ENCODE measurements at regions of chr2 and their contacts with region 1.

Region 1: DNA sequence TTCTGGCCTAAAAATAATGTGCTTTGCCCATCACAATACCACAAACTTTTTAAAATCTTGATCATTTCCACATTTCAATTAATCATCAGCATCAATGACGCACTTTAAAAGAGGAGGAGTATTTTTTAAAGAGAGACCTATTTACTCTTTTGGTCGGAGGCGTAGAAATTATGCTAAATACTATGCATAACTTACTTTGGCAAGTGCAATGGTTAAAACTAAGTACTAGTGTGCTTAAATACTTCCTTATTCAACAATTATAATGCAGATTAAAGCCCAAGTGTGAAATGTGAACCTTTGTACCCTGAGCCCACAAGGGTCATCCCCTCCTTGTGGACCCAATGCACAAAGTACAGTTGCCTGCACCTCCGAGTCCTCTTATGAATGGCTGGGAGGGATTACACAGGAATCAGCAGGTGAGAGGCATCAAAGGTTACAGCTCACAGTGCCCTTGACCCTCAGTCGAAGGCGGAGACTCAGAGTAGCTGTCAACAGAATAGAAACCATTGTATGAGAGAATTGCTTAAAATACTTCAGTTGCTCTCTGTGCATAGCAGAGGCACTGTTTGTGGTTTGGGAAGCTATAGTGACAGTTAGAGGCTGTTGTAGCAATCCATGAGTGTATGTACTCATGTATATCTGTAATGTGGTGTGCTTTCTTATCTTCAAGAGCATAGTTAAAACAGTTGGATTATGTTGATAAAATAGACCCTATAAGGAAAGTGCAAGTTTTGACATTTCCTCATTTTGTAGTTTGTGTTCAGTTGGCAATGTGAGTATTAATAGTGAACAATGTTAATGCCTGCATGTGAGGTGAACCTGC is 151.7 kb upstream of the ITGA4 start:
- DNase-seq: peak; percentile 96
- ATAC-seq: peak; percentile 80
- H3K4me3 ChIP-seq: no peak overlapping the region
- H3K27ac ChIP-seq: peak overlapping the region; percentile 99
- H3K4me1 ChIP-seq: peaks cover 49% of the 10 kb centered on the region
- H3K27me3 ChIP-seq: no peaks in the 10 kb centered on the region
- CTCF ChIP-seq: no peak
- EP300 ChIP-seq: peak; percentile 16 to 82; a peak in 3 of 4 replicates
- POLR2A ChIP-seq: peak; percentile 75
- RAD21 ChIP-seq: 0 out of 2 replicates have a peak, but pooled peaks have one; percentile 12

Region 2: GRCh38 chr2:181123798-181124231 is 181.7 kb before region 1 on chr2:
- CTCF ChIA-PET with region 1: interaction called, 3 read pairs
- POLR2A ChIA-PET with region 1: no interaction called
- RAD21 ChIA-PET with region 1: no interaction called
- SMC1A ChIA-PET with region 1: interaction called, 4 read pairs
- in situ Hi-C with region 1: loop called (anchors 5 kb)
- intact Hi-C with region 1: no loop called
- DNase-seq: peak; percentile 53
- ATAC-seq: peak; percentile 94
- H3K4me3 ChIP-seq: peak overlapping the region; percentile 53; the same call in 1 of the 2 replicates
- H3K27ac ChIP-seq: peak overlapping the region; percentile 81
- H3K4me1 ChIP-seq: peaks cover 14% of the 10 kb centered on the region
- H3K27me3 ChIP-seq: no peaks in the 10 kb centered on the region; a peak in 1 of 4 replicates
- CTCF ChIP-seq: no peak
- EP300 ChIP-seq: peak; percentile 77 to 86; a peak in 3 of 4 replicates
- POLR2A ChIP-seq: no peak
- RAD21 ChIP-seq: 0 out of 2 replicates have a peak, but pooled peaks have one; percentile 10

Region 3: DNA sequence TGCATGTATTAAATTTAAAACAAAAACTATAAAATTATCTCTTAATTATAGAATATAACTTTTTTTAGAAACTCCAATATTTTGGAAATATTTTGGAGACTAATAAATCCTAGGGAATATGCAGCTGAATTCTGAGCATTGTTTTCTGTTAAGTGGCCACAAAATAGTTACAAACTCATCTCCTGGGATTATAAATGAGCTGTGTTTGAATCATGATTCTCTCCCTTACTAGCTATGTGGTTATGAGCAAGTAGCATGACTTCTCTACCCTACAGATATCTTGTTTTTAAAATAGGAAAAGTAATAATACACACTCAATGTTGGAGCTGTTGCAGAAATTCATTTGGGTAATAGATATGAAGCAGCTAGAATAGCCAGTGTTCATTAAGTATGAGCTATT is 13.8 kb after region 1 on chr2:
- CTCF ChIA-PET with region 1: interaction called, 26 read pairs
- POLR2A ChIA-PET with region 1: interaction called, 7 read pairs
- RAD21 ChIA-PET with region 1: interaction called, 52 read pairs
- SMC1A ChIA-PET with region 1: interaction called, 69 read pairs
- in situ Hi-C with region 1: no loop called
- intact Hi-C with region 1: no loop called
- DNase-seq: no peak
- ATAC-seq: no peak
- H3K4me3 ChIP-seq: no peak overlapping the region
- H3K27ac ChIP-seq: no peak overlapping the region
- H3K4me1 ChIP-seq: peaks cover 9% of the 10 kb centered on the region; the same call in 1 of the 2 replicates
- H3K27me3 ChIP-seq: no peaks in the 10 kb centered on the region
- CTCF ChIP-seq: no peak
- EP300 ChIP-seq: no peak
- POLR2A ChIP-seq: no peak
- RAD21 ChIP-seq: no peak

Region 4: DNA sequence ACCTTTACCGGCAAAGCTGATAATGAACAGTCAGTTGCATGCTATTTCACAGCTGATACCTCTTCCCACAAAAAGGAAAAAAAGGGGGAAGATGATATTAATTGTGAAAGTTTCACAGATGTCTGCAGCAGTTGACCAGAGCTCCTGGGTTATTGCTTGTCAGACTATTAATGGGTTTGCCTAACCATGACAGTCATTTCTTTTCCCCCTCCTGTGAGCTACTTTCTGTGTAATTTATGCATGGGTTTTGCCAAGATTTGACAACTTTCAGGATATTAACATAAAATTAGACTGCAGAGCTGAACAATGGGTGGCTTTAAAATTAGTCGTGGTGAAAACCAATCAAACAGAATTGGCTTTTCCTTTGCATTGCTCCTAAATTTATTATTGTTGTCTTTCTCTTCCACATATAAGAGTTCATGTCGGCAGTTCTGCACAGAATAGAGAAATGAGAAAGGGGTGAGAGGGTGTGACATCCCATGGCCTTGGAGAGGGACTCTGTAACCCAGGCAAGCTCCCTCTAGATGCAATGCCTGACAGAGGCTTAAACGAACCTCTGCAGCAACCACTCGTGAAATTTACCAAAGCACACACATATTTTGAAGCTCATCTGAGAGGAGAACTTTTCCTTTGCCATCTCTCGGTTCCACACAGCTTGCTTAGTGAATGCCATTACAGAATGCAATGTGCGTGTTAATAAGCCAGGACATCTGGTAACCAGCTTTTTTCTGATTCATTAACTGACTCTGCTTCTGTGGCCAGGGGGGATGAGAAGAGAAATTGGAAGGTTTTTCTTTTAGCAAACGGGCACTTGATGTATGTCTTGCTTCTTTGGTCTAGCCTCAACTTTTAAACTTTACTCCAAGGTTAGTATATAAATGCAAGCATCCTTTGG is 69.5 kb after region 1 on chr2:
- CTCF ChIA-PET with region 1: interaction called, 5 read pairs
- POLR2A ChIA-PET with region 1: interaction called, 3 read pairs
- RAD21 ChIA-PET with region 1: interaction called, 6 read pairs
- SMC1A ChIA-PET with region 1: interaction called, 36 read pairs
- in situ Hi-C with region 1: no loop called
- intact Hi-C with region 1: no loop called
- DNase-seq: peak; percentile 42
- ATAC-seq: peak; percentile 87
- H3K4me3 ChIP-seq: peak overlapping the region; percentile 4; the same call in 1 of the 2 replicates
- H3K27ac ChIP-seq: peak overlapping the region; percentile 38; the same call in 1 of the 2 replicates
- H3K4me1 ChIP-seq: peaks cover 29% of the 10 kb centered on the region
- H3K27me3 ChIP-seq: no peaks in the 10 kb centered on the region
- CTCF ChIP-seq: no peak
- EP300 ChIP-seq: no peak
- POLR2A ChIP-seq: no peak
- RAD21 ChIP-seq: no peak

Region 5: DNA sequence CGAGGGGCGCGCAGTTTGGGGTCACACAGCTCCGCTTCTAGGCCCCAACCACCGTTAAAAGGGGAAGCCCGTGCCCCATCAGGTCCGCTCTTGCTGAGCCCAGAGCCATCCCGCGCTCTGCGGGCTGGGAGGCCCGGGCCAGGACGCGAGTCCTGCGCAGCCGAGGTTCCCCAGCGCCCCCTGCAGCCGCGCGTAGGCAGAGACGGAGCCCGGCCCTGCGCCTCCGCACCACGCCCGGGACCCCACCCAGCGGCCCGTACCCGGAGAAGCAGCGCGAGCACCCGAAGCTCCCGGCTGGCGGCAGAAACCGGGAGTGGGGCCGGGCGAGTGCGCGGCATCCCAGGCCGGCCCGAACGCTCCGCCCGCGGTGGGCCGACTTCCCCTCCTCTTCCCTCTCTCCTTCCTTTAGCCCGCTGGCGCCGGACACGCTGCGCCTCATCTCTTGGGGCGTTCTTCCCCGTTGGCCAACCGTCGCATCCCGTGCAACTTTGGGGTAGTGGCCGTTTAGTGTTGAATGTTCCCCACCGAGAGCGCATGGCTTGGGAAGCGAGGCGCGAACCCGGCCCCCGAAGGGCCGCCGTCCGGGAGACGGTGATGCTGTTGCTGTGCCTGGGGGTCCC is 151.7 kb after region 1 on chr2 and contains the start of gene ITGA4:
- CTCF ChIA-PET with region 1: interaction called, 235 read pairs
- POLR2A ChIA-PET with region 1: interaction called, 26 read pairs
- RAD21 ChIA-PET with region 1: interaction called, 340 read pairs
- SMC1A ChIA-PET with region 1: interaction called, 313 read pairs
- in situ Hi-C with region 1: loop called (anchors 5 kb)
- intact Hi-C with region 1: loop called (anchors 2 kb)
- DNase-seq: peak; percentile 56
- ATAC-seq: peak; percentile 90
- H3K4me3 ChIP-seq: peak within 1 kb of the TSS; percentile 88
- H3K27ac ChIP-seq: peak within 1 kb of the TSS; percentile 97
- H3K4me1 ChIP-seq: peaks cover 13% of the 10 kb centered on the region
- H3K27me3 ChIP-seq: no peaks in the 10 kb centered on the region
- CTCF ChIP-seq: peak; percentile 81 to 92 (median 81)
- EP300 ChIP-seq: no peak
- POLR2A ChIP-seq: peak; percentile 84
- RAD21 ChIP-seq: peak; percentile 93
- polyA plus RNA-seq, gene ITGA4: 12.4 to 16.2 TPM

Region 6: DNA sequence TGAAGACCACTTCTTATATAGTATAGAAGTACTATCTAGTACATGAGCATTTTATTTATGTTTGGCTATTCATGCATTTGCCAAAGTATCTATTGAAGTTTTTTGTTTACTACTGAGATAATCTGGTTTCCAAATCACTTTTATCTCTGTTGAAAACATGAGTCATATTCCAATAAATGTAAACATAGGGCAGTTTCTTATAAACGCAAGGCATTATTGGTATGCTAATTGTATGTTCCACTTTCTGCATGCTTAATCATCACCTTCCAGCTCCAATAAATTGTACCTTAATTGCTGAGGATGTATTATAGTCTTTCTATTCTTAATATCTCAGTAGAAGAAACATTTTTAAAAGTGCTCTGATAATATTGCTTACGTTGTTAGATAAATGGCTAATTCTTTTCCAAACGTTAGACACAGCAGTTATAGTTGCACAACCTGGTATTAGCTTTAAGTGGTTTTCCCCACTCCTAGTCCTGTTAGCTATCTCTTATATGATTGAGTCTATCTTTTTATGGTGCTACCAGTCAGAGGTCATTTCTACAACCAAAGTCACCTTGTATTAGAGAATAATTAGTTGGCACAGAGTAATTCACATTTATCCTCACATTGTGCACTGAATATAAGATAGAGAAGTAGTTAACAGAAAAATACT is 168.8 kb after region 1 on chr2:
- CTCF ChIA-PET with region 1: interaction called, 12 read pairs
- POLR2A ChIA-PET with region 1: interaction called, 3 read pairs
- RAD21 ChIA-PET with region 1: interaction called, 66 read pairs
- SMC1A ChIA-PET with region 1: interaction called, 12 read pairs
- in situ Hi-C with region 1: no loop called
- intact Hi-C with region 1: no loop called
- DNase-seq: no peak
- ATAC-seq: no peak
- H3K4me3 ChIP-seq: no peak overlapping the region
- H3K27ac ChIP-seq: no peak overlapping the region
- H3K4me1 ChIP-seq: peaks cover 19% of the 10 kb centered on the region
- H3K27me3 ChIP-seq: no peaks in the 10 kb centered on the region
- CTCF ChIP-seq: no peak
- EP300 ChIP-seq: no peak
- POLR2A ChIP-seq: no peak
- RAD21 ChIP-seq: no peak

Region 7: GRCh38 chr2:181586569-181587081 is 281.1 kb after region 1 on chr2:
- CTCF ChIA-PET with region 1: interaction called, 5 read pairs
- POLR2A ChIA-PET with region 1: interaction called, 4 read pairs
- RAD21 ChIA-PET with region 1: interaction called, 10 read pairs
- SMC1A ChIA-PET with region 1: interaction called, 5 read pairs
- in situ Hi-C with region 1: no loop called
- intact Hi-C with region 1: no loop called
- DNase-seq: peak; percentile 81
- ATAC-seq: peak; percentile 96
- H3K4me3 ChIP-seq: no peak overlapping the region
- H3K27ac ChIP-seq: peak overlapping the region; percentile 12; the same call in 1 of the 2 replicates
- H3K4me1 ChIP-seq: peaks cover 11% of the 10 kb centered on the region
- H3K27me3 ChIP-seq: no peaks in the 10 kb centered on the region
- CTCF ChIP-seq: no peak
- EP300 ChIP-seq: peak; percentile 45 to 68; a peak in 3 of 4 replicates
- POLR2A ChIP-seq: no peak
- RAD21 ChIP-seq: no peak